Dorsolateral prefrontal cortex (tissue), 120 donors: ENCODE measurements at regions of chr16 and their contacts with region 1.

Region 1: GRCh38 chr16:9090960-9091866 is at the start of gene HAPSTR1:
- DNase-seq: peak; percentile 99 to 100 (median 100)
- H3K4me3 ChIP-seq: peak within 1 kb of the TSS; percentile 67 to 98 (median 89)
- H3K27ac ChIP-seq: peak within 1 kb of the TSS; percentile 81 to 100 (median 96)
- H3K27me3 ChIP-seq: no peaks in the 10 kb centered on the region
- CTCF ChIP-seq: peak in 4 of 56 donors; percentile 15 to 23 (median 17)
- total RNA-seq, gene HAPSTR1: 60.1 to 117 (median 88.9) TPM

Region 2: DNA sequence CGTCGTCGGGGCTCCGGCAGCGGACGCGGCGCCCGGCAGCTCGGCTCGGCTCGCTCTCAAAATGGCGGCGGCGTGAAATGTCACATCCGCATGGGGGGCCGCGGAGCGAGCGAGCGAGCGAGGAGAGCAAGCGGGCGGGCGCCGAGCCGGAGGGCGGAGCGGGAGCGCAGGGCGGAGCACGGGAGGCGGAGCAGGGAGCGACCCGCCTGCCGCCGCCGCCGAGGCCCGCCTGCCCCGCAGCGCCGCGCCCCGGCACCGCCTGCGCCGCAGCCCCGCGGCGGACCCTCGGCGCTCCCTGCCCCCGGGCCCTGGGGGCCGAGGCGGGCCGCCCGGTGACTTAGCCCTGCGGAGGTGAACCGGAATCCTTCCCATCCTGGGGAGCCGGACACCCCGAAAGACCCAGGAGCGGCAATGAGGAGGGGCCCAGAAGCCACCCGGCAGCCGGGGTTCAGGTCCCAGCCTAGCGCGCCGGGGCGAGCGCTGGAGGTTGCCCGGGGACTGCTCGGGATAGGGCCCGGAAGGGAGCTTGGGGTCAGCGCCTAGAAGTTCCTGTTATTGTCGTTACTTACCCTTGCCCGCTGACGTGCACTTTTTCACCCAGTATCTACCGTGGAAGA is 127.3 kb before region 1 on chr16 and contains the start of gene USP7:
- intact Hi-C with region 1: loop called (anchors 2 to 5 kb)
- DNase-seq: peak; percentile 68 to 93 (median 83)
- H3K4me3 ChIP-seq: peak within 1 kb of the TSS; percentile 56 to 94 (median 80)
- H3K27ac ChIP-seq: peak within 1 kb of the TSS in 50 of 59 donors; percentile 41 to 91 (median 75)
- H3K27me3 ChIP-seq: no peaks in the 10 kb centered on the region
- CTCF ChIP-seq: peak in 1 of 56 donors; percentile 4
- total RNA-seq, gene USP7: 82.3 to 157 (median 115) TPM

Region 3: GRCh38 chr16:9012848-9013507 is 78.2 kb before region 1 on chr16:
- intact Hi-C with region 1: loop called in 1 of 2 experiments (anchors 5 kb)
- DNase-seq: peak in 5 of 10 donors; percentile 46 to 73 (median 58)
- H3K4me3 ChIP-seq: no peak overlapping the region
- H3K27ac ChIP-seq: peak overlapping the region in 1 of 59 donors; percentile 15
- H3K27me3 ChIP-seq: peaks cover 0 to 34% (median 0%) of the 10 kb centered on the region in 45 donors
- CTCF ChIP-seq: peak in 8 of 56 donors; percentile 9 to 22 (median 16)

Region 4: GRCh38 chr16:9124908-9125584 is 33.8 kb after region 1 on chr16:
- intact Hi-C with region 1: loop called in 1 of 2 experiments (anchors 5 kb)
- DNase-seq: no peak
- H3K4me3 ChIP-seq: no peak overlapping the region
- H3K27ac ChIP-seq: peak overlapping the region in 4 of 59 donors; percentile 10 to 23 (median 13)
- H3K27me3 ChIP-seq: no peaks in the 10 kb centered on the region
- CTCF ChIP-seq: peak in 21 of 56 donors; percentile 8 to 35 (median 24)

Region 5: GRCh38 chr16:9170470-9170869 is 79.3 kb after region 1 on chr16:
- intact Hi-C with region 1: no loop called
- DNase-seq: no peak
- H3K4me3 ChIP-seq: peak overlapping the region in 2 of 59 donors; percentile 13 to 20
- H3K27ac ChIP-seq: no peak overlapping the region
- H3K27me3 ChIP-seq: no peaks in the 10 kb centered on the region
- CTCF ChIP-seq: no peak